PC-3 (cell line): ENCODE measurements at regions of chr7 and their contacts with region 1.

Region 1: GRCh38 chr7:15720849-15721471 is 34.5 kb upstream of the MEOX2 start:
- DNase-seq: peak; percentile 70
- ATAC-seq: no peak
- H3K4me3 ChIP-seq: no peak overlapping the region
- H3K27ac ChIP-seq: no peak overlapping the region
- H3K4me1 ChIP-seq: no peaks in the 10 kb centered on the region
- H3K27me3 ChIP-seq: no peaks in the 10 kb centered on the region
- CTCF ChIP-seq: peak; percentile 89

Region 2: DNA sequence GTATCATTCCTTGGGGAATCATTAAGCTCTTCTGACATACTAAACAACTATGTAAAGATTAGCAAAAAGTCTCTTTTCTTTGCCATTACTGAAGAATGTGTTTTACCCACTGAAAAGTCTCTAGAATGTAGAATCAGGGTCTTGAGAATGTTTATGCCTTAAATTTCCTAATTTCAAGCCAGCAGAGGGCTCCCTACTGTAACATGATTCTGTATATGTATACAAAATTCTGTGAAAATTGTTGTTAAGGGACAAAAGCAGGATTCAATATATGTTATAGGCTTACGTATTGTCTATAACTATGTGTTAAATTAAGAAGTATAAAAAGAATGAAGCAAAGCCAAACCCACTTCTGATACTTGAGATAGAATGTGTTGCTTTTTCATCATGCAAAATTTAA is 521.5 kb before region 1 on chr7:
- CTCF ChIA-PET with region 1: no interaction called
- POLR2A ChIA-PET with region 1: no interaction called
- intact Hi-C with region 1: loop called (anchors 10 kb)
- DNase-seq: peak; percentile 44
- ATAC-seq: no peak
- H3K4me3 ChIP-seq: no peak overlapping the region
- H3K27ac ChIP-seq: peak overlapping the region; percentile 71; the same call in 1 of the 2 replicates
- H3K4me1 ChIP-seq: peaks cover 21% of the 10 kb centered on the region
- H3K27me3 ChIP-seq: no peaks in the 10 kb centered on the region
- CTCF ChIP-seq: peak; percentile 66

Region 3: DNA sequence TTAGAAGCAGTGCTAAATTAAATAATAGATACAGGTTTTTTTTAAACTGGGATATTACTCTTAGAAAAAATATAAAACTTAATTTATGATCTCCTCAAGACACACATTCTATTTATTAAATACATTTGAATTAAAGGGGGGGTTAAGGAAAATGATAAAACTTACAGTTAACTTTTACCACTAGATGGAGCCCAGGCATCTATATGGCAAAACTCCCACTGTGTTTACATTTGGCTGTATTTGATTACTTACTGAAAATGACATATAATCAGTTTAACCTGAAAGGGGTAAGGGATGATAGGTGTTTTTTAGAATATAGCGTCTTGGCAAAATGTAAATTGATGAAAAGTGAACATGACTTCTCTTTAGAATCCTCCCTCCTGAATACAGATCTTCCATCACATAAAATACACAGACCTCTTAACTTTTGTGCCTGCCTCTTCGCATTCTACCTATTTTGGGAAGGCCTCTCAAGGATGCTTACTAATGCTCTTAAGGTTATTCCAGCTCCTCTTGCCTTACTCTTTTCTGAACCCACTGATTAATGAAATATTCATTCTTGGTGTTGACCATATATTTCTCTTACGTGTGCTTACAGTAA is 394.8 kb before region 1 on chr7:
- CTCF ChIA-PET with region 1: interaction called, 3 read pairs
- POLR2A ChIA-PET with region 1: no interaction called
- intact Hi-C with region 1: loop called (anchors 1 kb)
- DNase-seq: peak; percentile 59
- ATAC-seq: peak; percentile 53; the same call in 1 of the 2 replicates
- H3K4me3 ChIP-seq: no peak overlapping the region
- H3K27ac ChIP-seq: no peak overlapping the region
- H3K4me1 ChIP-seq: no peaks in the 10 kb centered on the region
- H3K27me3 ChIP-seq: peaks cover 5% of the 10 kb centered on the region
- CTCF ChIP-seq: peak; percentile 77

Region 4: GRCh38 chr7:15503603-15504290 is 217.2 kb before region 1 on chr7:
- CTCF ChIA-PET with region 1: no interaction called
- POLR2A ChIA-PET with region 1: no interaction called
- intact Hi-C with region 1: loop called (anchors 2 kb)
- DNase-seq: peak; percentile 43
- ATAC-seq: peak; percentile 74
- H3K4me3 ChIP-seq: no peak overlapping the region
- H3K27ac ChIP-seq: peak overlapping the region; percentile 32
- H3K4me1 ChIP-seq: peaks cover 5% of the 10 kb centered on the region; the same call in 1 of the 2 replicates
- H3K27me3 ChIP-seq: no peaks in the 10 kb centered on the region
- CTCF ChIP-seq: peak; percentile 35; the same call in 1 of the 2 replicates

Region 5: DNA sequence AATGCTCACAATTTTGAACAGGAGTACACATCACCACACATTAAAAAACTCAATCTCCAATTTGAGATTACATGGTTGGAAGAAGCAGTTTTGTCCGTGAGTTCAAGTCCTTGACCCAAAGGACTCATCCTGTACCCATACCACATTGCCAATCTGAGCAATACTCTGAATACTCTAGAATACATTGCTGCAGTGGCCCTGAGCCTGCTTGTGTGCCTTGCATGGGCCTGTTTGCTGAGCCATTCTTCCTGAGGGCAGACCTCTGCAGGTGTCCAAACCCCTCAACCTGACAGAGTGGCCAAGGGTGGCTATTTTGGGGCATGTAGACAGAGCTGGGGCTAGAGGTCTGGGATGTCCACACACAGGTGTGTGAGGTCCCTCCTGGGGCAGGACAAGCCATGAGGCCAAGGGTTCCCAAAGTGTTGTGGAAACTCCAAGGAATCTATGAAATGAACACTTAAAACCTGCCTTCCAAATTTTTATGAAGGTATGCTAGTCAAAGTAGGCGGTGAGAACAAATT is 174.6 kb before region 1 on chr7:
- CTCF ChIA-PET with region 1: no interaction called
- POLR2A ChIA-PET with region 1: no interaction called
- intact Hi-C with region 1: no loop called
- DNase-seq: no peak
- ATAC-seq: no peak
- H3K4me3 ChIP-seq: no peak overlapping the region
- H3K27ac ChIP-seq: no peak overlapping the region
- H3K4me1 ChIP-seq: no peaks in the 10 kb centered on the region
- H3K27me3 ChIP-seq: no peaks in the 10 kb centered on the region
- CTCF ChIP-seq: no peak

Region 6: DNA sequence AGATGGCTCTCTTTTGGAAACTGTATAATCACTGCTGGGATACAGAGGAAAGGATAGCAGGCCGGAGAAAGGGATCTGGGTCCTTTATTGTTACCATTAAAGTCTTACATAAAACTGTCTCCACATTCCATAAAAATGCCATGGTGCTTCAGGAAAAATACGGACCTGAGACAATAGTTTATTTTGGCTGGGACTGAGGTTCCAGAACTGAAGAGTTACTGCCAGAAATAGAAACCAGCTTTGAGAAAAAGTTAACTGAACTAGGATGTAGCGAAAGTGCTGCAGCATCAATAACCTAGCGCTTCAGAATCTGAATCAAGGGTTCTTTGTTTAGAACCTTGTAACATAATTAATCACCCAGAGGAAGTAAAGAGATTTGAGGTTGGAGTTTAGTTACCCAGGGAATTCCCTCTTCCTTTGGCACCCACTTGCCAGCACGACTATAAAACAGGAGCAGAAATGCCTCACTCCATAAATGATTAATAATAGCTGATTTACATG is 72.4 kb before region 1 on chr7:
- CTCF ChIA-PET with region 1: no interaction called
- POLR2A ChIA-PET with region 1: no interaction called
- intact Hi-C with region 1: no loop called
- DNase-seq: no peak
- ATAC-seq: peak; percentile 76
- H3K4me3 ChIP-seq: no peak overlapping the region
- H3K27ac ChIP-seq: no peak overlapping the region
- H3K4me1 ChIP-seq: no peaks in the 10 kb centered on the region
- H3K27me3 ChIP-seq: no peaks in the 10 kb centered on the region
- CTCF ChIP-seq: no peak

Region 7: DNA sequence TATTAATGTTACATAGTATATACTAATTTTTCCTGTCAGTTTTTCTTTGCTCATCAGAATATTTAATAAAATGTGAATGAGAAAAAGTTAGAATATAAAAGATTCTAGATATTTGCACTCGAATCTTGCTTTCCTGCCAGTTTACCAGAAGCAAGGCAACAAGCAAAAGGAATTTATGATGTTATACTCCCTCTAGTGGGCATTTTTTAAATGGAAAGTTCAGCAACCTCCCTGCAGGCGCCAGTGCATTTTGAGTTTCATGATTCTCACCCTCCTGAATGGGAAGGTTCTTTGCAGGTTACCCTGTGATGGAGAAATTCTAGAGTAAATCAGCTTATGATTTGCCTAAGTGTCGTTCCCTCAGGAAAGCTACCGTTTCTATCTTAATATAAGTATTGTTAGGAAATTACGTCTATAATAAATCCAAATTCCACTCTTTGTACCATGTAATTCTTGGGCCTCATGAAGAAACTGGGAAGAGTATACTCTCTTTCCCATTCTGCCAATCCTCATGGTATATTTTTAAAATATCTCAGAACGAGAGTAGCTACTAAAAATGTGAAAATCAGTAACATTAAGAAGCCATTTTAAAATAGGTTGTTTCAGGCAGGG is 350.4 kb after region 1 on chr7:
- CTCF ChIA-PET with region 1: interaction called, 3 read pairs
- POLR2A ChIA-PET with region 1: no interaction called
- intact Hi-C with region 1: loop called (anchors 1 kb)
- DNase-seq: peak; percentile 83
- ATAC-seq: peak; percentile 72; the same call in 1 of the 2 replicates
- H3K4me3 ChIP-seq: no peak overlapping the region
- H3K27ac ChIP-seq: no peak overlapping the region
- H3K4me1 ChIP-seq: peaks cover 6% of the 10 kb centered on the region; the same call in 1 of the 2 replicates
- H3K27me3 ChIP-seq: no peaks in the 10 kb centered on the region
- CTCF ChIP-seq: peak; percentile 77